ENCODE measurements at regions of chr4 and their contacts with region 1.

Region 1: DNA sequence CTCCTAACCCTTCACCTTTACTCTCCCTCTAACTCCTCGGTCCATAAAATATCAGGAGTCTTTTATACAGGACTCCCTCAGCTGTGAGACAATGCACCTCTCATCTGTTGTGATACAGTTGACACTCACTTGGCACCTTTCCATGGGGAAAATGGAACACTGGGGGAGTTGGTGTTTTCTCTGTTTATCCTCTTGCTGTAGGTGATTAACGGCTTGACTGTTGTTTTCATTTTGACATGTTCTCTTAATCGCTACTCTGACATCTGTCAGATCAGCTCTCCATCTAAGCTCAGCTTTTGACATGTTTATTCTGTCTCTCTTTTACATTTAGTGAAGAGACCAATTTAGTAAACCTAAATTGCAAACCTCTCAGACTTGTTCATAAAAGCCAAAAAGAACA is 604.8 kb downstream of the TRAM1L1 start:
- DNase-seq: no peak
- ATAC-seq: no peak
- H3K4me3 ChIP-seq: no peak overlapping the region
- H3K27ac ChIP-seq: no peak overlapping the region
- H3K4me1 ChIP-seq: no peaks in the 10 kb centered on the region
- H3K27me3 ChIP-seq: no peaks in the 10 kb centered on the region
- CTCF ChIP-seq: no peak
- EP300 ChIP-seq: no peak
- POLR2A ChIP-seq: no peak
- RAD21 ChIP-seq: no peak

Region 2: DNA sequence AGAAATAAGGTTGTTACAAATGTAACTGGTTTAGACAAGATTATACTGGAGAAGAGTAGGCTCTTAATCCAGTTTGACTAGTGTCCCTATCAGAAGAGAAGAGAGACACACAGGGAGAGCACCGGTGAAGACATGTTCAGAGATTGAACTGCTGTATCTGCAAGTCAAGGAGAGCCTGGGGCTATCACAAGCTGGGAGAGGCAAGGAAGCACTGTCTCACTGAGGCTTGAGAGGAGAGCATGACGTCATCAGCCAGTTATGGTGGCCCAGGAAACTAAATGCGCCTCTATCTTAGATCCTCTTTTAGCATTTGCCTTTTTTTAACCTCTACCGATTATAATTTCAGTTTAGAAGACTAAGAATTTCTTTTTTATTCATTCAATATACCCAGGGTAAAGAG is 21.4 kb after region 1 on chr4:
- CTCF ChIA-PET with region 1: no interaction called
- POLR2A ChIA-PET with region 1: no interaction called
- in situ Hi-C with region 1: no loop called
- intact Hi-C with region 1: loop called (anchors 1 kb)
- DNase-seq: no peak
- ATAC-seq: no peak
- H3K4me3 ChIP-seq: no peak overlapping the region
- H3K27ac ChIP-seq: no peak overlapping the region
- H3K4me1 ChIP-seq: no peaks in the 10 kb centered on the region
- H3K27me3 ChIP-seq: no peaks in the 10 kb centered on the region
- CTCF ChIP-seq: no peak
- EP300 ChIP-seq: no peak
- POLR2A ChIP-seq: no peak
- RAD21 ChIP-seq: no peak